ENCODE measurements at regions of chr16 and their contacts with region 1.

Region 1: GRCh38 chr16:58533751-58534470 is 18.6 kb downstream of the SETD6 start:
- DNase-seq: no peak
- H3K4me3 ChIP-seq: no peak overlapping the region
- H3K27ac ChIP-seq: no peak overlapping the region
- H3K4me1 ChIP-seq: no peaks in the 10 kb centered on the region
- H3K27me3 ChIP-seq: no peaks in the 10 kb centered on the region
- CTCF ChIP-seq: no peak

Region 2: DNA sequence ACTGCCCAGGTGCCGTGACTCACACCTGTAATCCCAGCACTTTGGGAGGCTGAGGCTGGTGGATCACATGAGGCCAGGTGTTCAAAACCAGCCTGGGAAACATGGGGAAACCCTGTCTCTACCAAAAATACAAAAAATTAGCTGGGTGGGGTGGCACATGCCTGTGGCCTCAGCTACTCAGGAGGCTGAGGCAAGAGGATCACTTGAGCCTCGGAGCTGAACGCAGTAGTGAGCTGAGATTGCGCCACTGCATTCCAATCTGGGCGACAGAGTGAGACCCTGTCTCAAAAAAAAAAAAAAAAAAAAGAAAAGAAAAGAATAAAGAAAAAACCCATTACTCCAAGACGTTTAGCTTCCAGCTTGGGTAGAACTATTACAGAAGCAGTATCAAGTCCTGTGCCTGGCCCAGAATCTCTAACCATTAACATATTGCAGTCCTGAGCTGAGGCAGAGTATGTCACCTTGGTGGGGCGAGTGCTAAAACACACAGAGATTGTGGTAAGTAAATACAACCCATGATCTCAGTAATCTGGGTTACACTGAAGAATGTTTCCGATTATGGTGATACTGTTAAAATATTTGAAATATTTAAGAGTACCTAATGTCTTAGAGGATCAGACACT is 381.6 kb before region 1 on chr16:
- intact Hi-C with region 1: no loop called
- DNase-seq: no peak
- H3K4me3 ChIP-seq: no peak overlapping the region
- H3K27ac ChIP-seq: no peak overlapping the region
- H3K4me1 ChIP-seq: no peaks in the 10 kb centered on the region
- H3K27me3 ChIP-seq: no peaks in the 10 kb centered on the region
- CTCF ChIP-seq: no peak

Region 3: DNA sequence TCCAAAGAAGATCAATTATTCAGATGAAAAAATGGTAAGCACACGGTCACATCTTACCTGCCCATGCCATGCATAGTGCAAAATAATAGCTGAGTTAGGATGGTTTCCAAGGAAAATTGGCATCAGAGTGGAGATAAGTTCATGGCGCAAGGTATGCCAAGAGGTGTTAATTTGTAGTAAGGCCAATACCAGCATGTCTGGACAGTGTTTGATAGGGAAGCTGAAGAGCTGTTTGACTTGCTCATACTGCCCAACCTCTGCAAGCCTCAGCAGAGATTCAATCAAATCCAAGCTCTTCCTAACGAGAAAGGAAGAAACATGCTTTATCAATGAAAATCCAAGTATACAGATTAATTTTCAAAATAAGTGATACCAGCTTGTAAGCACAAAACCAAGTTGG is 44.7 kb after region 1 on chr16:
- intact Hi-C with region 1: loop called (anchors 5 kb)
- DNase-seq: no peak
- H3K4me3 ChIP-seq: no peak overlapping the region
- H3K27ac ChIP-seq: no peak overlapping the region
- H3K4me1 ChIP-seq: no peaks in the 10 kb centered on the region
- H3K27me3 ChIP-seq: no peaks in the 10 kb centered on the region
- CTCF ChIP-seq: no peak